Activated CD4-positive, alpha-beta T cell treated with anti-CD3 and anti-CD28 coated beads for 36 hours (primary cell): ENCODE measurements at regions of chr21 and their contacts with region 1.

Region 1: GRCh38 chr21:25457411-25457810 is 149.9 kb downstream of the MRPL39 start:
- DNase-seq: no peak
- ATAC-seq: peak; percentile 46
- H3K4me3 Mint-ChIP-seq: peak overlapping the region; percentile 67
- H3K27ac Mint-ChIP-seq: peak overlapping the region; percentile 89
- H3K4me1 Mint-ChIP-seq: peaks cover 83% of the 10 kb centered on the region
- H3K27me3 Mint-ChIP-seq: no peaks in the 10 kb centered on the region

Region 2: DNA sequence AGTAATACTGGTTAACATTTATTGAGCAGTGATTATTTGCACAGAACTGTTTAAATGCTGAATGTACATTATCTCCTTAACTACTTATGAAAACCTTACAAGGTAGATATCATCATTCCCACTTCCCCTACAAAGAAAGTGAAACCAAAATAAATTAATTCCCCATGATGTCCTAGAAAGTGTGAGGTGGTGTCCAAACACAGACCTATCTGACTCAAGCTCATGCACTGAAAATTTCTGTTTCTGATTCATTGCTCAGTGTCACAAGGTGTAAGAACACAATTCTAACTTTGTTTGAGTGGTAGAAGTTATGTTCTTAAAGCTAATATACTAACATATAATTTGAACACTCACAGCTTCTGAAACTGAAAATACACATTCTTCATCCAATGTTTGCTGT is 28.9 kb before region 1 on chr21:
- CTCF ChIA-PET with region 1: interaction called, 8 read pairs
- POLR2A ChIA-PET with region 1: interaction called, 4 read pairs
- intact Hi-C with region 1: loop called (anchors 1 kb)
- DNase-seq: no peak
- ATAC-seq: peak; percentile 93
- H3K4me3 Mint-ChIP-seq: peak overlapping the region; percentile 32
- H3K27ac Mint-ChIP-seq: peak overlapping the region; percentile 45
- H3K4me1 Mint-ChIP-seq: peaks cover 52% of the 10 kb centered on the region
- H3K27me3 Mint-ChIP-seq: no peaks in the 10 kb centered on the region

Region 3: DNA sequence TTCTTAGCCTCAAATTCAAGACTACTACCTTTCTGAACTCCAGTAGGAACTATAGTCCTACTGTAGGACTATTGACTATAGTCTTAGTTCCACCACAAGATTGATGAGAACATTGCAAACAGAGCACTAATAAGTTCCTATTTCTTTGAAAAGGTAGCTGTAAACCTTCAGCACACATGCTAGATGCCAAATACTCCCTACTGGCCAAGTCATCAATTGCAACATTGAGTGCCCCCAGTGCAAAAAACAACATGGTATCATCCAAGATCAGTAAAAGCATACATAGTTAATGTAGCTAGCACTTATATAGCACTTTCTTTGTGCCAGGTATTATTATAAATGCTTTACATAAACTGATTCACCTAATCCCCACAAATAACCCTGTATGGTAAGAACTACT is 50.1 kb after region 1 on chr21:
- CTCF ChIA-PET with region 1: interaction called, 4 read pairs
- POLR2A ChIA-PET with region 1: interaction called, 15 read pairs
- intact Hi-C with region 1: loop called (anchors 1 kb)
- DNase-seq: peak; percentile 42
- ATAC-seq: peak; percentile 37
- H3K4me3 Mint-ChIP-seq: peak overlapping the region; percentile 66
- H3K27ac Mint-ChIP-seq: peak overlapping the region; percentile 86
- H3K4me1 Mint-ChIP-seq: peaks cover 75% of the 10 kb centered on the region
- H3K27me3 Mint-ChIP-seq: no peaks in the 10 kb centered on the region

Region 4: GRCh38 chr21:25528510-25528909 is 71.1 kb after region 1 on chr21:
- CTCF ChIA-PET with region 1: no interaction called
- POLR2A ChIA-PET with region 1: no interaction called
- intact Hi-C with region 1: no loop called
- DNase-seq: no peak
- ATAC-seq: no peak
- H3K4me3 Mint-ChIP-seq: no peak overlapping the region
- H3K27ac Mint-ChIP-seq: no peak overlapping the region
- H3K4me1 Mint-ChIP-seq: no peaks in the 10 kb centered on the region
- H3K27me3 Mint-ChIP-seq: peaks cover 2% of the 10 kb centered on the region

Region 5: GRCh38 chr21:25573409-25574206 is 116.2 kb after region 1 on chr21:
- CTCF ChIA-PET with region 1: interaction called, 5 read pairs
- POLR2A ChIA-PET with region 1: interaction called, 30 read pairs
- intact Hi-C with region 1: loop called (anchors 1 kb)
- DNase-seq: peak; percentile 83
- ATAC-seq: peak; percentile 34
- H3K4me3 Mint-ChIP-seq: peak overlapping the region; percentile 93
- H3K27ac Mint-ChIP-seq: peak overlapping the region; percentile 96
- H3K4me1 Mint-ChIP-seq: peaks cover 72% of the 10 kb centered on the region
- H3K27me3 Mint-ChIP-seq: no peaks in the 10 kb centered on the region

Region 6: GRCh38 chr21:25750085-25750484 is 292.7 kb after region 1 on chr21:
- CTCF ChIA-PET with region 1: no interaction called
- POLR2A ChIA-PET with region 1: no interaction called
- intact Hi-C with region 1: no loop called
- DNase-seq: peak; percentile 18
- ATAC-seq: peak; percentile 39
- H3K4me3 Mint-ChIP-seq: no peak overlapping the region
- H3K27ac Mint-ChIP-seq: peak overlapping the region; percentile 76
- H3K4me1 Mint-ChIP-seq: peaks cover 6% of the 10 kb centered on the region
- H3K27me3 Mint-ChIP-seq: no peaks in the 10 kb centered on the region

Region 7: GRCh38 chr21:26572702-26573381 is 1115.4 kb after region 1 on chr21 and contains the start of gene CYYR1:
- CTCF ChIA-PET with region 1: no interaction called
- POLR2A ChIA-PET with region 1: no interaction called
- intact Hi-C with region 1: loop called in 1 of 2 experiments (anchors 10 kb)
- DNase-seq: no peak
- ATAC-seq: no peak
- H3K4me3 Mint-ChIP-seq: peak within 1 kb of the TSS; percentile 44
- H3K27ac Mint-ChIP-seq: no peak within 1 kb of the TSS
- H3K4me1 Mint-ChIP-seq: peaks cover 6% of the 10 kb centered on the region
- H3K27me3 Mint-ChIP-seq: peaks cover 31% of the 10 kb centered on the region
- total RNA-seq, gene CYYR1: not detected